ENCODE measurements at regions of chr17 and their contacts with region 1.

Region 1: GRCh38 chr17:49567871-49568694 is 7.6 kb upstream of the NXPH3 start:
- DNase-seq: peak; percentile 85
- H3K4me3 Mint-ChIP-seq: peak overlapping the region; percentile 63
- H3K27ac Mint-ChIP-seq: no peak overlapping the region
- H3K4me1 Mint-ChIP-seq: peaks cover 32% of the 10 kb centered on the region
- H3K27me3 Mint-ChIP-seq: peaks cover 41% of the 10 kb centered on the region

Region 2: DNA sequence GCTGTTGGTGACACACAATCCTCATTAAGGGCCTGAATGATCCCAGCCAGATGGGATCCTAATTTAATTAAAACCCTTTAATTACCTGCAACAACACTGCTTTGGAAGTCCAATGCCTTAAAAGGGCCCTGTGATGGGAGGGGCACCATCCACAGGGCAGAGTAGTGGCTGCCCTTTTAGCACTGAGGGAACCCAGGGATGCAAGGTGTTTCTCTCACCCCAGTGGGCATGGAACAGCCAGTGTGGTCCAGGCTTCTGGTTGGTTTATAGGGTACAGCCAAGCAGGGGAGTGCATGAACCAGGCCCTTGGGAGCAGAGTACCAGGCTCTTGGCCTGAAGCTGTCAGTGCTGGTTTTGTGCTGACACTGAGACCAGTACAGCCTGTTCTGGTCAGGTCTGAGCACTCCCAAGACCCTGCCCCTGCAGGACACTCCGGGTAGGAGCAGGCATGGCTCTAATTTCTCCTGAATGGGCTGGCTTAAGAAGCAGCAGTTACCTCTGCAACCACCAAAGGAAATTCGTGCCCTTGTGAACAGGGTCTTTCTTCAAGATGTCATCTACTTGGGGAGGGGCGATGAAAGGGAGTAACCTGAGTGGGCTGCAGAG is 17.4 kb after region 1 on chr17:
- CTCF ChIA-PET with region 1: no interaction called
- POLR2A ChIA-PET with region 1: no interaction called
- DNase-seq: no peak
- H3K4me3 Mint-ChIP-seq: no peak overlapping the region
- H3K27ac Mint-ChIP-seq: no peak overlapping the region
- H3K4me1 Mint-ChIP-seq: no peaks in the 10 kb centered on the region
- H3K27me3 Mint-ChIP-seq: no peaks in the 10 kb centered on the region

Region 3: DNA sequence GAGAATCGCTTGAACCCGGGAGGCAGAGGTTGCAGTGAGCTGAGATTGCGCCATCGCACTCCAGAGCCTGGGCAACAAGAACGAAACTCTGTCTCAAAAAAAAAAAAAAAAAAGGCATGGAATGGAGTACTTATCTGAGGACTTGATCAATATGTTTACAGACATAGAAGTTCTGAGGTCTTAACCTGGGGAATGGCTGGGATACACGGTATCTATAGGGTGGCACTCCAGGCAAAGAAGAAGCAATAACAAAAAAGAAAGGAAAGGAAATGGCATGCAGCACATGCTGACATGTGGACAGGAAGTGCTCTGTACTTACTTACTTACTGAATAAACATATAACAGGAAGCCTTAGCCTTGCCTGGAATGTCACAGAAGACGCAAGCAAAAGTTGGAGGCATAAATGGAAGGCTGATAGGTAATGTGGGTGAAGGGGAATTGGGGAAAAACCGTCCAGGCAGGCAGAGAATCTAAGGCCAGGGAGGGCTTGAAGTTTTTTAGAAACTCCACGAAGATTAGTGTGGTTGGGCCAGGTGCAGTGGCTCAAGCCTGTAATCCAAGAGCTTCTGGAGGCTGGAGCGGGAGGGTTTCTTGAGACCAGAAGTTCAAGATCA is 119.9 kb after region 1 on chr17:
- CTCF ChIA-PET with region 1: interaction called, 95 read pairs
- POLR2A ChIA-PET with region 1: interaction called, 4 read pairs
- DNase-seq: peak; percentile 32
- H3K4me3 Mint-ChIP-seq: peak overlapping the region; percentile 57
- H3K27ac Mint-ChIP-seq: peak overlapping the region; percentile 85
- H3K4me1 Mint-ChIP-seq: peaks cover 24% of the 10 kb centered on the region
- H3K27me3 Mint-ChIP-seq: no peaks in the 10 kb centered on the region

Region 4: GRCh38 chr17:49694847-49695683 is 127.0 kb after region 1 on chr17:
- CTCF ChIA-PET with region 1: interaction called, 95 read pairs
- POLR2A ChIA-PET with region 1: interaction called, 19 read pairs
- DNase-seq: peak; percentile 75
- H3K4me3 Mint-ChIP-seq: no peak overlapping the region
- H3K27ac Mint-ChIP-seq: peak overlapping the region; percentile 77
- H3K4me1 Mint-ChIP-seq: peaks cover 25% of the 10 kb centered on the region
- H3K27me3 Mint-ChIP-seq: no peaks in the 10 kb centered on the region

Region 5: DNA sequence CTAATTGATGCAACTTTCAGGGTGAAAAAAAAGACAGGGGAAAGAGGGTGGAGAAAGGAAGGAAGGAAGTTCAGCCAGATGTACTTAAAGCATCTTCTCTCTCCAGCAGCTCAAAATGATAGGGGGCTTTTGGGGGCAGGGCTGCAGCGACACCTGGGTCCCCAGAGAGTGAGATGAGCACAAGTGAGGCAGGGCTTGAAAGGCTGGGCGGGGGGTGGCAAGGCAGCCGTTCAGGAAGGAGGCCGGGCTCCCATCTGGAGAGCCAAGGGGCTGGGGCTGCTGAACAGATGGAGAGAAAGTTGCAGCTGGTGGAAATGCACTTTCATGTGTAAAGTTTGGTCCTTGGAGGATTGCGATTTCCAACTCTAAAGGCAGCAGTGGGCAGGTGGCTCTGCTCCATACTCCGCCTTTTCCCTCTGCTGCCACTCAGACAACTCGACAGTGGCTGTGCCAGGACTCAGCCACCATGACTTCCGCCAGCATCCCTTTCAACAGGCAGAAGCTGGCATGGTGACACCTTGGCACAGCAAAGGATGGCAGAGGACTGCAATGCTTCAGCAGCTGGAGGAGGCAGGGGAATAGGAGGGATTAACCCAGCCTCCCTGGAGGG is 132.0 kb after region 1 on chr17:
- CTCF ChIA-PET with region 1: interaction called, 95 read pairs
- POLR2A ChIA-PET with region 1: interaction called, 19 read pairs
- DNase-seq: no peak
- H3K4me3 Mint-ChIP-seq: no peak overlapping the region
- H3K27ac Mint-ChIP-seq: no peak overlapping the region
- H3K4me1 Mint-ChIP-seq: peaks cover 35% of the 10 kb centered on the region
- H3K27me3 Mint-ChIP-seq: no peaks in the 10 kb centered on the region

Region 6: DNA sequence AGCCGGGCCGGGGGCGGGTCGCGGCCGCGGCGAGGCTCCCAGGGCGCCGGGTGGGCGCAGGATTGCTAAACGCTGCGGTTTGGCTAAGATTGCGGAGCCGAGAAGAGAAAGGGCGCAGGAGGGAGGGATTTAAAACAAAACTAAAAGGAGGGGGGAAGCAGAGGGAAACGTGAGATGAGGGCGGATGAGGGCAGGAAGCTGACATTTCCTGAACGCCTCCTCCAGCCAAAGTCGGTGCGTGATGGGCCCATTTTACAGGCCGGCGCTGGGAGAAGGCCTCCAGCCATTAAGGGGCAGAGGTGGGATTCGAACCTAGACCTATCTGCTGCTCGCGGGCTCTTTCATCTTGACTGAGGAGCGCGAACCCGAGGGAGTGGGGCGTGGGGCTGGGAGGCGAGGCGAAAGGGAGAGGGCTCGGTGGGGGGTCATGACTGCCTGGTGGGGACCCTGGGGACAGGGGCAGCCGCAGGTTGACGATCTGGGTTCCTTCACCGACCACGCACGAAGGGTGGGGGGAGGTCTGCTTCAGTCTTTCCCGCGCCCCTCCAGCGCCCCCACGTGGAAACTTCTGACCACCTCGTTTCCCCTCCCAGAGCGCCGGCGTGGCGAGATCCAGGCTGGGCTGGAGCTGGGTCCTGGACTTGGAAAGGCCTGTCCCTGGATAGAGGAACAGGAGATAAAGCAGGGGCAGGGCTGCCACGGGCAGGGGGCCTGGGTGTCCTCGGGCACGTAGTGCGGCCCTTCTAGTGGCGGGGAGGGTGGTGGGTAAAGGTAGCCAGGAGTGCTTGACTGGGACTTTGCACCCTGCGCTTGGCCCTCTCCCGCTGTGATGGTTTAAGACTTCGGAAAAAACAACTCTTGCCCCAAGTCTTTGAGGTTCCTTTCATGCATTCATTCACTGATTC is 283.6 kb after region 1 on chr17:
- CTCF ChIA-PET with region 1: interaction called, 12 read pairs
- POLR2A ChIA-PET with region 1: no interaction called
- DNase-seq: peak; percentile 73
- H3K4me3 Mint-ChIP-seq: peak overlapping the region; percentile 79
- H3K27ac Mint-ChIP-seq: peak overlapping the region; percentile 67
- H3K4me1 Mint-ChIP-seq: peaks cover 16% of the 10 kb centered on the region
- H3K27me3 Mint-ChIP-seq: peaks cover 8% of the 10 kb centered on the region

Measured in activated CD4-positive, alpha-beta memory T cell treated with anti-CD3 and anti-CD28 coated beads, Interleukin-2, amount 10 ng/mL, durations not matched to agents 7 days and 5 days (primary cell).